ENCODE measurements at regions of chr9 and their contacts with region 1.

Region 1: DNA sequence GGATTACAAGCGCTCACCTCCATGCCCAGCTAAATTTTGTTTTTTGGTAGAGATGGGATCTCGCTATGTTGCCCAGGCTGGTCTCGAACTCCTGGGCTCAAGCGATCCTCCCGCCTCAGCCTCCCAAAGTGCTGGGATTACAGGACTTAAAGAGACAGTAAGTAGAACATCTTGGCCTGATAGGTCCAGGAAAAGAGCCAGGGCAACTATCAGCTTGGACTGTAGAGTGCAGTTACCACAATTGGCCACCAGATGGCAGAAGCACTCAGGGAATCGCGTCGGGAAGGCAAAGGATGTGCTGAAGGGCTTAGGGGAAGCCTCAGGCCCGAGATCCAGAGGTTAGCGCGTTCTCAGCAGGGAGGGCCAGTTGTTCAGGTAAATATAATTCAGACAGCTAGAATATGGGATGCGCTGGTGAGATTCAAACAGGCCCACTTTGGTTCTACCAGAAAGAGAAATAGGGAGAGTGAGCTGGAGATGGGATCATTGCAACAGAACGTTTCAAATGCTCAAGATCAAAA is 21.5 kb downstream of the C9orf57 start:
- DNase-seq: peak; percentile 75
- CTCF ChIP-seq: peak; percentile 94

Region 2: DNA sequence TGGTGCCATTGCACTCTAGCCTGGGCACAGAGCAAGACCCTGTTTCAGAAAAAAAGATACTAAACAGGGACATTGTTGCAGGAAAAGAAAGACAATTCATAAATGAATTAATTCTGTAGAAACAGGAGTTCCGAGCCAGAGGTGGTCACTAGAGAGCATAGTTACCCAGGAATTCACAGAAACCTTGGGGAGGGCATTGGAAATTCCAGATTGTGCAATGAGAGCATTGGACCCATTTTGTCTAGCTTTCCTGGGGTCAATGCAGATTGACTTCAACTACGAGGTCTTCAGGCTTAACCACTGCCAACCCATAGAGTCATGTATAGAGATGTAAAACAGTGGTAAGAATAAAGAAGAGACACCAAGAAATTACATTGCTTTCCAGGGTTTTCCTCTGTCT is 191.1 kb before region 1 on chr9:
- in situ Hi-C with region 1: no loop called
- DNase-seq: no peak
- CTCF ChIP-seq: no peak

Region 3: GRCh38 chr9:72271613-72272478 is 232.9 kb after region 1 on chr9:
- in situ Hi-C with region 1: loop called (anchors 5 kb)
- DNase-seq: peak; percentile 70
- CTCF ChIP-seq: peak; percentile 83

Region 4: GRCh38 chr9:72592502-72593403 is 553.8 kb after region 1 on chr9:
- in situ Hi-C with region 1: loop called (anchors 25 kb)
- DNase-seq: peak; percentile 46
- CTCF ChIP-seq: peak; percentile 73

Region 5: DNA sequence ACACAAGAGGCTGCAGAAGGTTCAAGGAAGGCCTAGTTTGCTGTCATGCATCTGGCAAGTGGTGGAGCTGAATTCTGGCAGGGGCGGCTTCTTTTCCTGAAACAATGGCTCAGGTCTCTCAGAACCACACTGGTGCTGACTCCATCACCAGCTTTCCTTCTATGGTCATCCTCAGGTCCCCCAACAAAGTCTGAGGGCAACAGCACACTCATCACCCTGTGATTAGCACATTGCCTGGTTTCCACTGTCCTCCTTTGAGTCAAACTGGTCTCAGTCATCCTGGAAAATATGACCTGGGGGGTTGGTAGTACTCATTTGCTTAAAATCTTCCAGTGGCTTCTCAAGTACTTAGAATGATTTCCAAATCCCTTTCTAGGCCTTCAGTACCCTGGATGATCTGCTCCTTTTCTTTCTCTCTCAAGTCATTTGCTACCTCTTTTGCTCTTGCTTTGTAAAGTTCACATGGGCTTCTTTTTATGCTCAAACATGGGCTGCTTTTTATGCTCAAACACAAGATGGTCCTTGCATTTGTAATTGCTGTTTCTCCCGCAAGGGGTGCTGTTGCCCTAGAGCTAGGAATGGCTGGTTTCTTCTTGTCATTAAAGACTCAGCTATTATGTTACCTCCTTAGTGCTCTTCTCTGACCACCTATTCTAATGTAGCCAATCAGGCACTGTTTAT is 769.0 kb after region 1 on chr9:
- in situ Hi-C with region 1: loop called (anchors 25 kb)
- DNase-seq: no peak
- CTCF ChIP-seq: peak; percentile 19

Measured in GM13977 (cell line).